ENCODE measurements at regions of chr2 and their contacts with region 1.

Region 1: GRCh38 chr2:84209941-84210340 is 249.1 kb downstream of the SUCLG1 start:
- DNase-seq: no peak
- ATAC-seq: no peak
- H3K4me3 ChIP-seq: no peak overlapping the region
- H3K27ac ChIP-seq: no peak overlapping the region
- H3K4me1 ChIP-seq: no peaks in the 10 kb centered on the region
- H3K27me3 ChIP-seq: no peaks in the 10 kb centered on the region

Region 2: DNA sequence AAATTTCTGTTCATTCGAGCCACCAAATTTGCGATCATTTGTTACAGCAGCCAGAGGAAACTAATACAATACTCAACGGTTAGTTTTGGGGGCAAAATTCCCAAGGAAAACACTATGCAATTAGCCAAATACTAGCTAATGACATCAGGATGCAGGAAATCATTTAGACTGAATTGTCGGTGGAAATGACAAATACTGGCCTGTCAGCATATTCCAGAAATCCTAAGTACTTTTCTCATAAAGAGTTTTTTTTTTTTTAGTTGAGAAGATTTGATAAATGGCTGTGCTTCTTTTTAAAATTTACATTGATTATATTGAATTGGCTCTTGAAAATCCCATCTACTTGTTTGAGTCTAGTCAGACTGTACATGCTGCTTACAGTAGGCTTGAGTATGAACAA is 161.0 kb before region 1 on chr2:
- intact Hi-C with region 1: no loop called
- DNase-seq: no peak
- ATAC-seq: no peak
- H3K4me3 ChIP-seq: no peak overlapping the region
- H3K27ac ChIP-seq: no peak overlapping the region
- H3K4me1 ChIP-seq: no peaks in the 10 kb centered on the region
- H3K27me3 ChIP-seq: no peaks in the 10 kb centered on the region

Region 3: DNA sequence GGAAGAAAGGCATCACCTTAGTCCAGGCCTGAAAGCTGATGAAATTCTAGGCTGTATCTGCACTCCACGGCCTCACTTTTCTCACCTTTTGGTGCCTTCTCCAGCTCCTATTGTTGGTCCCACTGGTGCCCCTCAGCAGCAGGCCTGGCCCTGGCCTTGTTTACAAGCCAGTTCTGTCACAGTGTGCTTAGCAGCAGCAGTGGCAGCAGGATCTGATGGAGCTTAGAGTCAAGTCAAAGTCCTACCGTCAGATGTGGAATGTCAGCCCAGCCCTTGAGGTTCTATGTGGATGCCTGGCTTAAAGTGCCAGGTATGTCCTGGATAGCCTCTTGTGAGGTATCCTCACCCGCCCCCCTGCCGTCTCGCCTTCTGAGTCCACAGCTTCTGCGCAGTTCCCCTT is 32.2 kb before region 1 on chr2:
- intact Hi-C with region 1: loop called in 1 of 4 experiments (anchors 2 kb)
- DNase-seq: no peak
- ATAC-seq: no peak
- H3K4me3 ChIP-seq: no peak overlapping the region
- H3K27ac ChIP-seq: no peak overlapping the region
- H3K4me1 ChIP-seq: no peaks in the 10 kb centered on the region
- H3K27me3 ChIP-seq: no peaks in the 10 kb centered on the region

Region 4: GRCh38 chr2:84388133-84388532 is 178.2 kb after region 1 on chr2:
- intact Hi-C with region 1: no loop called
- DNase-seq: no peak
- ATAC-seq: no peak
- H3K4me3 ChIP-seq: no peak overlapping the region
- H3K27ac ChIP-seq: no peak overlapping the region
- H3K4me1 ChIP-seq: no peaks in the 10 kb centered on the region
- H3K27me3 ChIP-seq: no peaks in the 10 kb centered on the region

Region 5: DNA sequence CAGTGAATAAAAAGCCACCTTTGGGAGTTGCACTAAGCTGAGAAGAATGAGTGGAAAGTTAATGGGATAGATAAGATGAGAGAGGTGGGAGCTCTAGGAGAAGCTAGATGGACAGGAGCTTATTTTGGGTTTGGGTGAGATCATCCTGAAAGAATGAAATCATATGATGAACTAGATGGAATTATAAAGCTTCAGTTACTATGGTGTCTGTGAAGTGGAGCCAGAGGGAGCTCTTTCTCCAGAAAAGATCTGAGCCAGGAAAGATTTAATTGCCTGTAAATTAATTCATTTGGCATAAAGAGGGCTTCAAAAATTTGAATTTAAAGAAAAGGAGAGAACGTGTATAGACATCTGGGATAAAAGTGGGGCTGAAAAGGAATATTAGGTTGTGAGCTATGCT is 316.6 kb after region 1 on chr2:
- intact Hi-C with region 1: no loop called
- DNase-seq: no peak
- ATAC-seq: no peak
- H3K4me3 ChIP-seq: no peak overlapping the region
- H3K27ac ChIP-seq: no peak overlapping the region
- H3K4me1 ChIP-seq: no peaks in the 10 kb centered on the region
- H3K27me3 ChIP-seq: no peaks in the 10 kb centered on the region